CD8-positive, alpha-beta memory T cell (primary cell): ENCODE measurements at regions of chr17 and their contacts with region 1.

Region 1: GRCh38 chr17:3738562-3739295 is 15.0 kb downstream of the HASPIN start:
- DNase-seq: peak; percentile 46 to 85 (median 57)
- H3K4me3 ChIP-seq: no peak overlapping the region
- H3K4me3 Mint-ChIP-seq: peak overlapping the region; percentile 6 to 84 (median 49)
- H3K27ac ChIP-seq: no peak overlapping the region
- H3K27ac Mint-ChIP-seq: peak overlapping the region; percentile 68 to 98 (median 92)
- H3K4me1 ChIP-seq: peaks cover 30% of the 10 kb centered on the region
- H3K4me1 Mint-ChIP-seq: peaks cover 33 to 45% (median 43%) of the 10 kb centered on the region in 3 donors
- H3K27me3 ChIP-seq: no peaks in the 10 kb centered on the region
- H3K27me3 Mint-ChIP-seq: peaks cover 0 to 4% of the 10 kb centered on the region in 2 donors

Region 2: GRCh38 chr17:3683054-3683511 is 55.6 kb before region 1 on chr17:
- CTCF ChIA-PET with region 1: interaction called, 23 read pairs
- POLR2A ChIA-PET with region 1: no interaction called
- DNase-seq: peak in 4 of 5 donors; percentile 42 to 74 (median 54)
- H3K4me3 ChIP-seq: no peak overlapping the region
- H3K4me3 Mint-ChIP-seq: peak overlapping the region in 2 of 7 donors; percentile 26 to 27
- H3K27ac ChIP-seq: no peak overlapping the region
- H3K27ac Mint-ChIP-seq: peak overlapping the region in 6 of 8 donors; percentile 1 to 79 (median 70)
- H3K4me1 ChIP-seq: peaks cover 6% of the 10 kb centered on the region
- H3K4me1 Mint-ChIP-seq: peaks cover 7 to 14% (median 10%) of the 10 kb centered on the region in 3 donors
- H3K27me3 ChIP-seq: no peaks in the 10 kb centered on the region
- H3K27me3 Mint-ChIP-seq: no peaks in the 10 kb centered on the region

Region 3: DNA sequence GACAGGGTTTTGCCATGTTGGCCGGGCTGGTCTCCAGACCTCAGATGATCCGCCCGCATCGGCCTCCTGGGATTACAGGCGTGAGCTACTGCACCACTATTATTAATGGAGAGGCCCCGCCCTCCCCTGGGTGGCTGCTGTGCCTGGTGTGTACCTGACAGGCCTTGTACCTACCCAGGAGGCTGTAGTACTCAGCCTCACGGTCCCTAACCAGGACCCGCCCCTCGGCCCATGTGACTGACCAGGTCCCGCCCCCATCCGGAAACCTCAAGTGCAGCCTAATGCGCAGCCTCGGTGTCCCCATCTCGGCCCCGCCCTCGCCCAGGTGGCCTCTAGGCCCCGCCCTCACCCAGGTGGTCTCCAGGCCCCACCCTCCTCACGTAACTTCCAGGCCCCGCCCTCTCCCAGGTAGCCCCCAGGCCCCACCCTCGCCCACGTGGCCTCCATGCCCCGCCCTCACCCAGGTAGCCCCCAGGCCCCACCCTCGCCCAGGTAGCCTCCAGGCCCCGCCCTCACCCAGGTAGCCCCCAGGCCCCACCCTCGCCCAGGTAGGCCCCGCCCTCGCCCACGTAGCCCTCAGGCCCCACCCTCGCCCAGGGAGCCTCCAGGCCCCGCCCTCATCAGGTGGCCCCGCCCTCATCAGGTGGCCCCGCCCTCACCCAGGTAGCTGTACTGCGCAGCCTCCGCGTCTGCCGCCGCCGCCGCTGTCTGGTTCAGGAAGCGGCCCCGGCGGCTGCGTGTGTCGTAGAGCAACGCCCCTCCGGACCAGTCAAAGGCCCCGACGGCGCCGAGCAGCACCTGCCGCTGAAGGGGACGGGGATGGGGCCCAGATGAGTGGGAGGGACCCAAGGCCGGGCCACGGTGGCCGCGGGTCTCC is 16.0 kb after region 1 on chr17:
- CTCF ChIA-PET with region 1: interaction called, 85 read pairs
- POLR2A ChIA-PET with region 1: interaction called, 3 read pairs
- DNase-seq: peak; percentile 69 to 88 (median 78)
- H3K4me3 ChIP-seq: peak overlapping the region; percentile 37
- H3K4me3 Mint-ChIP-seq: peak overlapping the region in 3 of 7 donors; percentile 19 to 83 (median 30)
- H3K27ac ChIP-seq: peak overlapping the region; percentile 59
- H3K27ac Mint-ChIP-seq: peak overlapping the region in 4 of 8 donors; percentile 42 to 83 (median 64)
- H3K4me1 ChIP-seq: peaks cover 31% of the 10 kb centered on the region
- H3K4me1 Mint-ChIP-seq: peaks cover 23 to 45% (median 25%) of the 10 kb centered on the region in 3 donors
- H3K27me3 ChIP-seq: no peaks in the 10 kb centered on the region
- H3K27me3 Mint-ChIP-seq: no peaks in the 10 kb centered on the region

Region 4: GRCh38 chr17:3770466-3770865 is 31.7 kb after region 1 on chr17:
- CTCF ChIA-PET with region 1: interaction called, 14 read pairs
- POLR2A ChIA-PET with region 1: interaction called, 4 read pairs
- DNase-seq: peak; percentile 43 to 89 (median 77)
- H3K4me3 ChIP-seq: no peak overlapping the region
- H3K4me3 Mint-ChIP-seq: peak overlapping the region; percentile 61 to 81 (median 75)
- H3K27ac ChIP-seq: peak overlapping the region; percentile 48
- H3K27ac Mint-ChIP-seq: peak overlapping the region; percentile 87 to 99 (median 92)
- H3K4me1 ChIP-seq: peaks cover 52% of the 10 kb centered on the region
- H3K4me1 Mint-ChIP-seq: peaks cover 62 to 77% (median 73%) of the 10 kb centered on the region in 3 donors
- H3K27me3 ChIP-seq: no peaks in the 10 kb centered on the region
- H3K27me3 Mint-ChIP-seq: peaks cover 0 to under 1% of the 10 kb centered on the region in 2 donors

Region 5: DNA sequence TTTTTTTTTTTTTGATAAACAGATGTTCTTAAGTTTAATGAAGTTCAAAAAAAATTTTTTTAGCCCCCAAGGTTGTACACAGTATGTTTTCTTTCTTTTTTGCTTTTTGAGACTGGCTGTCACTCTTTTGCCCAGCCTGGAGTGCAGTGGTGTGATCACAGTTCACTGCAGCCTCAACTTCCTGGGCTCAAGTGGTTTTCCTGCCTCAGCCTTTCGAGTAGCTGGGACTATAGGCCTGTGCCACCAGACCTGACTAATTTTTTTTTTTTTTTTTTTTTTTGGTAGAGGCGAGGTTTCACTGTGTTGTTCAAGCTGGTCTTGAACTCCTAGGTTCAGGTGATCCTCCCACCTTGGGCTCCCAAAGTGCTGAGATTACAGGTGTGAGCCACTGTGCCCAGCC is 49.5 kb after region 1 on chr17:
- CTCF ChIA-PET with region 1: interaction called, 11 read pairs
- POLR2A ChIA-PET with region 1: interaction called, 4 read pairs
- DNase-seq: peak in 2 of 5 donors; percentile 57 to 72
- H3K4me3 ChIP-seq: no peak overlapping the region
- H3K4me3 Mint-ChIP-seq: peak overlapping the region; percentile 3 to 78 (median 60)
- H3K27ac ChIP-seq: no peak overlapping the region
- H3K27ac Mint-ChIP-seq: peak overlapping the region; percentile 26 to 87 (median 74)
- H3K4me1 ChIP-seq: peaks cover 15% of the 10 kb centered on the region
- H3K4me1 Mint-ChIP-seq: peaks cover 38 to 72% (median 53%) of the 10 kb centered on the region in 3 donors
- H3K27me3 ChIP-seq: no peaks in the 10 kb centered on the region
- H3K27me3 Mint-ChIP-seq: no peaks in the 10 kb centered on the region

Region 6: DNA sequence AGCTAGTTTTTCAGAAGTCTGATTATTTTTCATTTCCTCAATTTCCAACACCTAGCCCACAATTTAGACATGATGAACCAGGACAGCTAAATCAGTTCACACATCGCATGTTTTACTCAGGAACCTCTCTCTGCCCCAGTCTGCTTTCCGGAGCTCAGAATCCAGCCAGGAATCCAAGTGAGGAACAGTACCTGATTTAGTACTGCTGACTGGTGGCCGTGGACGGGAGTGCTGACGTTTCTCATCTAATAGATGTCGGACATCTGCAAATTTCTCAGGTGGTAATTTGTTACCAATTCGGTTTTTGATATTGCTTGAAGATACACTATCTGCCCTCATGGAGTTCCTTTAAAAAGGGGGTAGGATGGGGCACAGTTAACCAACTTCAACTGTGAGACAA is 77.2 kb after region 1 on chr17:
- CTCF ChIA-PET with region 1: interaction called, 19 read pairs
- POLR2A ChIA-PET with region 1: no interaction called
- DNase-seq: no peak
- H3K4me3 ChIP-seq: no peak overlapping the region
- H3K4me3 Mint-ChIP-seq: no peak overlapping the region
- H3K27ac ChIP-seq: no peak overlapping the region
- H3K27ac Mint-ChIP-seq: no peak overlapping the region
- H3K4me1 ChIP-seq: no peaks in the 10 kb centered on the region
- H3K4me1 Mint-ChIP-seq: no peaks in the 10 kb centered on the region
- H3K27me3 ChIP-seq: no peaks in the 10 kb centered on the region
- H3K27me3 Mint-ChIP-seq: no peaks in the 10 kb centered on the region

Region 7: GRCh38 chr17:3835410-3836229 is 96.9 kb after region 1 on chr17:
- CTCF ChIA-PET with region 1: interaction called, 15 read pairs
- POLR2A ChIA-PET with region 1: no interaction called
- DNase-seq: no peak
- H3K4me3 ChIP-seq: no peak overlapping the region
- H3K4me3 Mint-ChIP-seq: no peak overlapping the region
- H3K27ac ChIP-seq: no peak overlapping the region
- H3K27ac Mint-ChIP-seq: peak overlapping the region in 2 of 8 donors; percentile 14 to 20
- H3K4me1 ChIP-seq: no peaks in the 10 kb centered on the region
- H3K4me1 Mint-ChIP-seq: peaks cover 11 to 37% (median 30%) of the 10 kb centered on the region in 3 donors
- H3K27me3 ChIP-seq: no peaks in the 10 kb centered on the region
- H3K27me3 Mint-ChIP-seq: no peaks in the 10 kb centered on the region